B cell (primary cell): ENCODE measurements at regions of chr13 and their contacts with region 1.

Region 1: DNA sequence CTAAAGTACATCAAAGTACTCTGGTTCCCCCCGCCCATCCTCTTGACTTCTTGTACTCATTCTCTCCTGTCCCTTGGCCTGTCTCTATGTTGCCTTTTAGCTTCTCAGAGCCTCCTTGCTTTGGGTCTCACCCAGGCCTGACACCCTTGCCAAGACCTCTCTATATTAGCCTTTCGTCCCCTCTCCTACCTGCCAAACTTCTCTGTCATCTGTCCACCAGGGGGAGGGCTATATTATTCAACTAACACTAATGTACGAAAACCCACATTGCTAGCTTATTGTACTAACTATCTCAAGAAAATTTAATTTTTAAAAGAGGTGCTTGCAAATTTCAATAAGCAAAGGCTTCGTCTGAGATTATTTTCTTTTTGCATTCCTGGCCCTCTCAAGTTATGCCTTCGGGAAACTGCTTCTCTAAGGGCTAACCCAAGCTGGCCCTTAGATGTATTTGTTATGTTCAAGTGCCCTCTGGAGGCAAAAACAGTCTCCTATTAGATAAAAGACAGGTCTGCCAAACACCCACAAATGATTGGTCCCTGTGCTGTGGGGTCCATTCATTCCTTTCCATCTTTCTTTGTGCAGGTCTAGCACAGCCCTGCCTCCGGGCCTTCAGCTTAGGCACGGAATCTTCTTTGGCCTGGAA is 6.3 kb upstream of the MRPS31 start:
- DNase-seq: peak; percentile 82
- ATAC-seq: peak; percentile 83
- H3K4me3 ChIP-seq: peak overlapping the region; percentile 16 to 61 (median 47)
- H3K4me3 Mint-ChIP-seq: peak overlapping the region; percentile 69
- H3K27ac ChIP-seq: peak overlapping the region; percentile 14 to 60
- H3K27ac Mint-ChIP-seq: peak overlapping the region; percentile 86
- H3K4me1 ChIP-seq: peaks cover 11 to 29% of the 10 kb centered on the region in 2 donors
- H3K4me1 Mint-ChIP-seq: peaks cover 24% of the 10 kb centered on the region
- H3K27me3 ChIP-seq: no peaks in the 10 kb centered on the region
- H3K27me3 Mint-ChIP-seq: no peaks in the 10 kb centered on the region
- CTCF ChIP-seq: peak; percentile 93

Region 2: GRCh38 chr13:39684531-39685137 is 1092.7 kb before region 1 on chr13:
- CTCF ChIA-PET with region 1: interaction called, 98 read pairs
- POLR2A ChIA-PET with region 1: no interaction called
- intact Hi-C with region 1: loop called (anchors 1 kb)
- DNase-seq: peak; percentile 47
- ATAC-seq: no peak
- H3K4me3 ChIP-seq: no peak overlapping the region
- H3K4me3 Mint-ChIP-seq: no peak overlapping the region
- H3K27ac ChIP-seq: no peak overlapping the region
- H3K27ac Mint-ChIP-seq: no peak overlapping the region
- H3K4me1 ChIP-seq: peaks cover 0 to 7% of the 10 kb centered on the region in 2 donors
- H3K4me1 Mint-ChIP-seq: peaks cover 13% of the 10 kb centered on the region
- H3K27me3 ChIP-seq: no peaks in the 10 kb centered on the region
- H3K27me3 Mint-ChIP-seq: no peaks in the 10 kb centered on the region
- CTCF ChIP-seq: peak; percentile 77

Region 3: DNA sequence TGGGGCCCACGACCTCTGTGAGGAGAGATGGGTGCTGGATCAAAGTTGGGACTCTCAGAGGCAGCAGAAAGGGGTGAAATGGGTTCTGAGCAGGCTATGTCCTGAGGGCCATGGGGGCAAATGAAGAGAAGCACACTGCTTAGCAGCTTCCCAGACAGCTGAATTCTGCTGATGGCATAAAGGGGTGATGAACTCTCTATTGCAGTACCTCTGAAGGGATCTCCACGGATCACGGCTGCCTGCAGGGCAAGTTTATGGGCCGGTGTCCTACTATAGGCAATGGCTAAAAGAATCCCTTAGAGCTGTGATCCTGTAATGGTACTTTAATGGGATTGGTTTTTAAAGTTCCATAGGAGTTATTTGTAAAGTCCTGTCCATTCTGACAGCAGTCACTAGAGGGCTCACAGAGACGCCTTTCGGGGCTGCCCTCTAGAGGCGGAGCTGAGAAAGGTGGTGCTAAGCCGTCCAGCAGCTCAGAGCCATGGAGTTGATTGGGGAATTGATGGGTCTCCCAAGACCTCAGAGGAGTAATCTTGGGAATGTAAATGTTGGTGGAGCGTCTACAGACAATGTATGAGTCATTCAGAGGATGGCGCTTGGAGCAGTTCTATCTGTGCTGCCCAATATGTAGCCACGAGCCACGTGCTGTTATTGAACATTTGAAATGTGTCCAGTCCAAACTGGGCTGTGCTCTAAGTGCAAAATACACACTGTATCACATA is 834.6 kb before region 1 on chr13:
- CTCF ChIA-PET with region 1: interaction called, 28 read pairs
- POLR2A ChIA-PET with region 1: no interaction called
- intact Hi-C with region 1: loop called (anchors 1 kb)
- DNase-seq: peak; percentile 75
- ATAC-seq: peak; percentile 99
- H3K4me3 ChIP-seq: no peak overlapping the region
- H3K4me3 Mint-ChIP-seq: no peak overlapping the region
- H3K27ac ChIP-seq: no peak overlapping the region
- H3K27ac Mint-ChIP-seq: no peak overlapping the region
- H3K4me1 ChIP-seq: peaks cover 0 to 2% of the 10 kb centered on the region in 2 donors
- H3K4me1 Mint-ChIP-seq: peaks cover 1% of the 10 kb centered on the region
- H3K27me3 ChIP-seq: peaks cover 0 to 4% (median 0%) of the 10 kb centered on the region in 4 experiments
- H3K27me3 Mint-ChIP-seq: peaks cover 4% of the 10 kb centered on the region
- CTCF ChIP-seq: peak; percentile 98

Region 4: GRCh38 chr13:40682449-40683240 is 94.6 kb before region 1 on chr13:
- CTCF ChIA-PET with region 1: interaction called, 10 read pairs
- POLR2A ChIA-PET with region 1: no interaction called
- intact Hi-C with region 1: no loop called
- DNase-seq: peak; percentile 55
- ATAC-seq: peak; percentile 45
- H3K4me3 ChIP-seq: no peak overlapping the region
- H3K4me3 Mint-ChIP-seq: peak overlapping the region; percentile 23
- H3K27ac ChIP-seq: no peak overlapping the region
- H3K27ac Mint-ChIP-seq: no peak overlapping the region
- H3K4me1 ChIP-seq: peaks cover 19 to 22% of the 10 kb centered on the region in 2 donors
- H3K4me1 Mint-ChIP-seq: peaks cover 19% of the 10 kb centered on the region
- H3K27me3 ChIP-seq: no peaks in the 10 kb centered on the region
- H3K27me3 Mint-ChIP-seq: no peaks in the 10 kb centered on the region
- CTCF ChIP-seq: peak; percentile 91

Region 5: GRCh38 chr13:40789275-40790133 is 12.2 kb after region 1 on chr13 and contains the start of gene SLC25A15:
- CTCF ChIA-PET with region 1: interaction called, 46 read pairs
- POLR2A ChIA-PET with region 1: no interaction called
- intact Hi-C with region 1: loop called (anchors 1 kb)
- DNase-seq: peak; percentile 82
- ATAC-seq: peak; percentile 95
- H3K4me3 ChIP-seq: peak within 1 kb of the TSS; percentile 21 to 73 (median 69)
- H3K4me3 Mint-ChIP-seq: peak within 1 kb of the TSS; percentile 84
- H3K27ac ChIP-seq: peak within 1 kb of the TSS; percentile 29 to 57
- H3K27ac Mint-ChIP-seq: peak within 1 kb of the TSS; percentile 81
- H3K4me1 ChIP-seq: peaks cover 9 to 13% of the 10 kb centered on the region in 2 donors
- H3K4me1 Mint-ChIP-seq: peaks cover 10% of the 10 kb centered on the region
- H3K27me3 ChIP-seq: no peaks in the 10 kb centered on the region
- H3K27me3 Mint-ChIP-seq: no peaks in the 10 kb centered on the region
- CTCF ChIP-seq: peak; percentile 19
- total RNA-seq, gene SLC25A15: 3.8 and 4.5 TPM in 2 replicates

Region 6: GRCh38 chr13:40813661-40814454 is 36.6 kb after region 1 on chr13:
- CTCF ChIA-PET with region 1: interaction called, 12 read pairs
- POLR2A ChIA-PET with region 1: no interaction called
- intact Hi-C with region 1: no loop called
- DNase-seq: no peak
- ATAC-seq: no peak
- H3K4me3 ChIP-seq: no peak overlapping the region
- H3K4me3 Mint-ChIP-seq: no peak overlapping the region
- H3K27ac ChIP-seq: no peak overlapping the region
- H3K27ac Mint-ChIP-seq: no peak overlapping the region
- H3K4me1 ChIP-seq: peaks cover 8 to 9% of the 10 kb centered on the region in 2 donors
- H3K4me1 Mint-ChIP-seq: peaks cover 18% of the 10 kb centered on the region
- H3K27me3 ChIP-seq: no peaks in the 10 kb centered on the region
- H3K27me3 Mint-ChIP-seq: no peaks in the 10 kb centered on the region
- CTCF ChIP-seq: peak; percentile 50

Region 7: DNA sequence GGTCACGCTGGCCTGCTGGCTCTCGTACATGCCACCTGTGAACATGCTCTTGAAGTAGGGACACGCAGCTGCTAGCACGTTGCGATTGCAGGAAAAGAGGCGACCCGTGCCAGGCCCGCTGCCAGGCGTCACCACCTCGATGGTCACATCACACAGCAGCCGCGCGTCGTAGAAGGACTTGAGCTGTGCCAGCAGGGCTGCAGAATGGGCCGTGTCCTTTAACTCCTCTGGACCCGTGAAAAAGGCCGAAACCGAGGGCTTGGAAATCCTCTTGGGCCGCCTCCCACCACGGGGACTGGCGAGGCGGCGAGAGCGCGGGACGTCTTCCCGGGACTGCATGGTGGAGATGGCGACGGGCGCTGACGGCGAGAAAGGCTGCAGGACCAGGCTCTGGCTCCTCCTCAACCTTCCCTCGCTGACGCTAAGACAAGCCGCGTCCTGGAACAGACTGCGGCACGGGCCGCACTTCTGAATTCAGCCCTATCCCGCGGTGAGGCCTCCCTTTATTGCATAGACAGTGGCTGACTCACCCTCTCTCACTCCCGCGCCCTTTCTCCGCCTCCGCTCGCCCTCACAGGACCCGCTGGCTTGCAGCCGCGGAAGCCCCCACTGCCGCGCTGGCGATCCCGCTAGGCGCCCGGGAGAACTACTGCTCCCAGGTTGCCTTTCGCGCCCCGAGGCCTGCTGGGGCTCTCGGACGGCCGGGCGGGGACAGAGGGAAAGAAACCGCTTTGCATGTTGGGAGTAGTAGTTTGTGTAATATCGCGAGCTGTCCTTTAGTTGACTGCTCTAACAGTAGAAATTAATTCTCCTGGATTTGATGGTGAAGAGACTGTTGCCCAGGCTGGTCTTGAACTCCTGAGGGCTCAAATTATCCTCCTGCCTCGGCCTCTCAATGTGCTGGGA is 416.9 kb after region 1 on chr13 and contains the start of gene KBTBD7:
- CTCF ChIA-PET with region 1: no interaction called
- POLR2A ChIA-PET with region 1: no interaction called
- intact Hi-C with region 1: loop called (anchors 2 kb)
- DNase-seq: peak; percentile 90
- ATAC-seq: peak; percentile 94
- H3K4me3 ChIP-seq: peak within 1 kb of the TSS; percentile 59 to 92 (median 88)
- H3K4me3 Mint-ChIP-seq: peak within 1 kb of the TSS; percentile 96
- H3K27ac ChIP-seq: peak within 1 kb of the TSS; percentile 32 to 63
- H3K27ac Mint-ChIP-seq: peak within 1 kb of the TSS; percentile 94
- H3K4me1 ChIP-seq: peaks cover 33 to 34% of the 10 kb centered on the region in 2 donors
- H3K4me1 Mint-ChIP-seq: peaks cover 45% of the 10 kb centered on the region
- H3K27me3 ChIP-seq: no peaks in the 10 kb centered on the region
- H3K27me3 Mint-ChIP-seq: no peaks in the 10 kb centered on the region
- CTCF ChIP-seq: no peak
- total RNA-seq, gene KBTBD7: 8.4 and 9.2 TPM in 2 replicates